IMR-90 (cell line): ENCODE measurements at regions of chr13 and their contacts with region 1.

Region 1: DNA sequence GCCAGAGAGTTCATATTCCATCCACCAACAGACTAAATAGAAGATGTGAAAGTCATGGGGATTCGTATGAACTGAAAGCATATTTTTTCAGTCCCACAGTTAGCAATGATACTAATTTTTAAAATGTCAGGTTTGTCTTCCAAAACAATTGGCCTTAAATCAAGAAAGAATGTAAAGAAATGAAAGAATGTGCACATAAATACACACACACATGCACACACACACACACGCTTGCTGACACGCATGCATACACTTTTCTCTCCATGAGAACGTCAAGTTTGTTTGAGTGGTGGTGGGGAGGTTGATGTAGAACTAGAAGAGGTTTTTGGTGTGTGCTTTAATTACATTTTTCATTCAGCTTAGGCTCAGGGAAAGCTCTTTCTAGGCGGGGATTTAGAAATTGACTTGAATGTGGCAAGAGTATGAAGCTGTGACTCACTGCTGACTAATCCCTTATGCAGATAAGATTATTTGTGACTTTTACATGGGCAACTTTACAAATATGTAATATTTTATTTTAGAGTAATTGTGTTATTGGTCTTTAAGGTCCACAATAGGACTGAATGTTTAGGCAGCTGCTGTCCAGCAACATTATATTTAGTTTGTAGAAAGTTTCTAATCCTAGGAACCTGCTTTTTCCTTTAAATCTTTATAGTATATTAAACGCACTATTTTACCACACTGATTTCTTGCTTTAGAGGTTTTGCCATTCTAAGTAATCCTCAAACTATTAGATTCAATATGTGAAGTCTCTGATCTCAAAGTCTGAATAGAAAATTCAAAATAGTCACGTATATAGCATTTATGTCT is 18.8 kb downstream of the FLT1 start:
- DNase-seq: peak; percentile 97
- ATAC-seq: peak; percentile 63
- H3K4me3 ChIP-seq: no peak overlapping the region
- H3K27ac ChIP-seq: peak overlapping the region; percentile 63
- H3K4me1 ChIP-seq: peaks cover 14% of the 10 kb centered on the region
- H3K27me3 ChIP-seq: no peaks in the 10 kb centered on the region
- CTCF ChIP-seq: no peak
- POLR2A ChIP-seq: no peak
- RAD21 ChIP-seq: no peak

Region 2: DNA sequence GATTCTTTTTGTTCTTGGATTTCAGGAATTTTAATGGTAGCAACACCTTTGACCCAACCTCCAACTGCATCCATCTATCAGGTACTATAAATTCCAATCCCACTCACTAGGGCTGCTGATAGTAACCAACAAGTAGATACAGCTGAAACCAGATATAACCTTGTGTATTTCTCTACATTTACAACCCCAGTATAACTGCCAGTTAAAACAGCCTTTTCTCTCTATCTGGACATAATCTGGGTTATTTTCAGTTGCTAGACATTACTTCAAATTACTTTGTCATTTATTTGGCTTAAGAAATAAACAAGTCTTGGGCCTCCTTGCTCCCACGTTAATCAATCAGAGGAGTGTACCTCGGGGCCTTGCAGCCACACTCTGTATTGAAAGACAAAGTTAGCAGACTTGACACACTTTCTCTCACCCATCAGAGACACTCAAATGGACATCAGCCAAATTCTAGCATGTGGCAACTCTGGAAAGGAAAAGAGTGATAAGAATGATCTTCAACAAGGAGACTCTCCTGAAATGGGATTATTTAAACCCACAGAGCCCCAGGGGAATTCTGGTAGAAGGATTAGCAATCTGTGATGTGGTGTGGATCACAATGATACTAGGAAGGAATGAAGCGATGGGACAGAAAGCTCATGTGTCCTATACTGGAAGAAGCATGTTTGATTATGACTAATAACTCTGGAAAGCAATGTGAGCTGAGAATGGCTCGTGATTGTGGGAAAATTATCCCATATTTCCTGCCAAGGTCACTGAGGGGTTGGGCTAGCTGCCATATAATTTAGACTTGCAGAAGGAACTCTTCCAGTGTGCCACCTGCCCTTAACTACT is 138.7 kb before region 1 on chr13:
- CTCF ChIA-PET with region 1: no interaction called
- POLR2A ChIA-PET with region 1: no interaction called
- dilution Hi-C with region 1: no loop called
- in situ Hi-C with region 1: no loop called
- intact Hi-C with region 1: loop called (anchors 5 kb)
- DNase-seq: peak; percentile 89
- ATAC-seq: peak; percentile 35; the same call in 1 of the 2 replicates
- H3K4me3 ChIP-seq: no peak overlapping the region
- H3K27ac ChIP-seq: no peak overlapping the region
- H3K4me1 ChIP-seq: peaks cover 29% of the 10 kb centered on the region
- H3K27me3 ChIP-seq: no peaks in the 10 kb centered on the region
- CTCF ChIP-seq: no peak
- POLR2A ChIP-seq: no peak
- RAD21 ChIP-seq: no peak

Region 3: GRCh38 chr13:28650284-28650683 is 174.2 kb after region 1 on chr13:
- CTCF ChIA-PET with region 1: no interaction called
- POLR2A ChIA-PET with region 1: no interaction called
- dilution Hi-C with region 1: no loop called
- in situ Hi-C with region 1: no loop called
- intact Hi-C with region 1: loop called (anchors 5 kb)
- DNase-seq: peak; percentile 85
- ATAC-seq: peak; percentile 89
- H3K4me3 ChIP-seq: no peak overlapping the region
- H3K27ac ChIP-seq: no peak overlapping the region
- H3K4me1 ChIP-seq: peaks cover 10% of the 10 kb centered on the region
- H3K27me3 ChIP-seq: no peaks in the 10 kb centered on the region
- CTCF ChIP-seq: no peak
- POLR2A ChIP-seq: no peak
- RAD21 ChIP-seq: no peak

Region 4: DNA sequence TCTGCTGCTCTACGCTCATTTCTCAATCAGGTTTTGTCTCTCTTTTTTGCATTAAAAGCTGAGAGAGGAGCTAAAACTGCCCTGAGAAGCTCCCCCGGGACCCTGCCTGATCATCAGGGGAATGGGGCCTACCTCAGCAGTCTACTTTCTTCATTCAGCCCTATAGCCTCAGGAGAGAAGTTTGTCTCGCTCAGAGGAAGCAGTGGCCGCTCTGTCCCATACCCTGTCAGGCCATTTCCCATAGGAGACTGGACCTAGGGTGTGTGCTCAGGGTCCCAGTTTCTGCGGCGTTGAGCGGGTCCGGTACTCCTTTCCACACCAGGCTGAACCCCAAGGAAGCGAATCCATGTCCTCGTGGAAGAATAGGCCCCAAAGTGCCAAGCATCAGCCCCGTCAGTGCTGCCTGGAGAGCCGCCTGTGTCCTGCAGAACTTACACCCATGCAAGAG is 1967.9 kb after region 1 on chr13:
- CTCF ChIA-PET with region 1: no interaction called
- POLR2A ChIA-PET with region 1: no interaction called
- dilution Hi-C with region 1: no loop called
- in situ Hi-C with region 1: no loop called
- intact Hi-C with region 1: no loop called
- DNase-seq: no peak
- ATAC-seq: no peak
- H3K4me3 ChIP-seq: no peak overlapping the region
- H3K27ac ChIP-seq: no peak overlapping the region
- H3K4me1 ChIP-seq: peaks cover 7% of the 10 kb centered on the region
- H3K27me3 ChIP-seq: no peaks in the 10 kb centered on the region
- CTCF ChIP-seq: no peak
- POLR2A ChIP-seq: no peak
- RAD21 ChIP-seq: no peak